Activated T-helper 1 cell treated with anti-CD3 and anti-CD28 coated beads, Interleukin-12 subunit alpha, Interleukin-12 subunit beta, Interleukin-2, Interleukin-4 antibody, amounts not matched to agents 30 ng/mL and 10 ng/mL and 1 ng/mL, durations not matched to agents 14 hours and 24 hours and 36 hours (primary cell): ENCODE measurements at regions of chr2 and their contacts with region 1.

Region 1: DNA sequence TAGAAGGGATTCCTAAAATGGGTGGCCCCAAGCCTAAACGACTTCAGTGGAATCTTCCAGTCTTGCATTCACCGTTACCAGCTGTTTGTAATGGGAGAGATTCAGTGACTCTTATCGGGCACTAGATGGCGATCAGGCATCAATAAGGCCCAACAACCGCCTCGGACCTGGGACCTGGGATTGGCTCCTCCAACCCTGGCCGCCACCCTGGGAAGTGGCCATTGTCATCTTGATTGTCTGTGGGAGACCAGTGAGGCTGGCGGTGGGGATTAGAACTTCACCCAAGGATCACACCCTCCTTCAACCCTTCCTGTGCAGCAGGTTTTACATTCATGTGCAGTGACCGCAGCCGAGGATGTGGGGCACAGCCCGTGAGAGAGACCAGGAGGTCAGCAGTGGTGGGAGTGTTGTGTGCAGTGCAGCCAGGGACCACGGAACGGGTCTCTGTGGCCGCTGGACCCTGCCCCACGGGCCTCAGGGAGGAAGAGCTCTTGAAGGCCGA is 85.3 kb downstream of the SPP2 start:
- DNase-seq: peak; percentile 43
- H3K4me3 Mint-ChIP-seq: no peak overlapping the region
- H3K27ac Mint-ChIP-seq: no peak overlapping the region
- H3K4me1 Mint-ChIP-seq: peaks cover 19% of the 10 kb centered on the region
- H3K27me3 Mint-ChIP-seq: peaks cover 10% of the 10 kb centered on the region

Region 2: GRCh38 chr2:233832869-233833311 is 302.9 kb before region 1 on chr2:
- intact Hi-C with region 1: no loop called
- DNase-seq: no peak
- H3K4me3 Mint-ChIP-seq: no peak overlapping the region
- H3K27ac Mint-ChIP-seq: no peak overlapping the region
- H3K4me1 Mint-ChIP-seq: peaks cover 9% of the 10 kb centered on the region
- H3K27me3 Mint-ChIP-seq: no peaks in the 10 kb centered on the region

Region 3: DNA sequence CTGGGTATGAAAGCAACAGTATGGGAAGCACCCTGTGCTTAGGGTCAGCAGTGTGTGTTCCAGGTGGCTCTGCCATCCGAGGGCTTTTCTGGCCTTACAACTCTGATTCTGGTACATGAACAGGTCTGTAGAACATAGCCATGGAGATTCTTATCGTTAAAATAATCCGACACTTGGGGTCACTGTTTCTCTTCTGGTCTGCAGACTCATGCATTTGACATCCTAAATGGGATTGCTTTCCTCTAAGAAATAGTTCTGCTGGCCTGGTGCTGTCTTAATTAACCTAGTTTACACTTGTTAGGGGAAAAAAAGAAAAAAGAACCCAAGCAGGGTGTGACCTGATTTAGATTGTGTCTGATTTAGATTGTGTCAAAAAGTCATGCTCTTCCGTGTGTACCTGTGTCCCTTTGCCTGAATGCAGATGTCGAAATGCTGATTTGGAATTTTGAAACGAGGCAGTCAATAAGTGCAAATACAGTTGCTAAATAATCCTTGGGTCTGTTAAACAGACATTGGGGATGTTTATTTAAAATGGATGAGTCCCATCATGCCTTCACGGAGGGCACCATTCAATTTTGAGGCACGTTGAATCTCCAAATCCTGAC is 159.0 kb before region 1 on chr2:
- intact Hi-C with region 1: loop called (anchors 1 kb)
- DNase-seq: peak; percentile 12
- H3K4me3 Mint-ChIP-seq: no peak overlapping the region
- H3K27ac Mint-ChIP-seq: no peak overlapping the region
- H3K4me1 Mint-ChIP-seq: peaks cover 39% of the 10 kb centered on the region
- H3K27me3 Mint-ChIP-seq: peaks cover 10% of the 10 kb centered on the region

Region 4: DNA sequence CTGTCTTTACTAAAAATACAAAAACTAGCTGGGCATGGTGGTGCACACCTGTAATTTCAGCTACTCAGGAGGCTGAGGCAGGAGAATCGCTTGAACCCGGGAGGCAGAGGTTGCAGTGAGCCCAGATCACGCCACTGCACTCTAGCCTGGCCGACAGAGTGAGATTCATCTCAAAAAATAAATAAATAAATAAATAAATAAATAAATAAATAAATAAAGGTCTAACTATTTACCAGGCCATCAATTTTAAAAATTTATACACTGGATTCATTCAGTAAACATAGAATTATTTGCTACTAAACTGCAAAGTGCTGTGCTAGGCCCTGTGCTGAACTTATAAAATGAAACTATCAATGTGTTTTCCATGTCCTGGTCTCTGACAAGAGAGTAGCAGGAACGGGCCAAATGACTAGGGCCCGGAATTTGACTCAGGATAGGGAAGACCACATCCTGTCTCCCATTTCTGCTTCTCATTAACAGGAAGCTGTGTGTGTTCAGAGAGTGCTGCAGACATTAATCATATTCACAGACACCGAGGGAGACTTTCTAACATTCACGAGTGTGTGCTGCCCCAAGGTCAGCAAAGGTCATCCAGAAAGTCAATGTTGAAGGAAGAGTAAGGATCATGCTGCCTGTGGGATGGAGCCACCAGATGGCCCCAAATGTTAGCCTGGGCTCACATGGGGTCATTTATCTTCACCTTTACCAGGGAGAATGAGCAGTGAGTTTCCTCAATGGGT is 10.5 kb after region 1 on chr2:
- intact Hi-C with region 1: no loop called
- DNase-seq: no peak
- H3K4me3 Mint-ChIP-seq: peak overlapping the region; percentile 43
- H3K27ac Mint-ChIP-seq: peak overlapping the region; percentile 10
- H3K4me1 Mint-ChIP-seq: peaks cover 35% of the 10 kb centered on the region
- H3K27me3 Mint-ChIP-seq: peaks cover 5% of the 10 kb centered on the region

Region 5: GRCh38 chr2:234278556-234279255 is 142.9 kb after region 1 on chr2:
- intact Hi-C with region 1: loop called (anchors 2 kb)
- DNase-seq: peak; percentile 35
- H3K4me3 Mint-ChIP-seq: peak overlapping the region; percentile 44
- H3K27ac Mint-ChIP-seq: peak overlapping the region; percentile 82
- H3K4me1 Mint-ChIP-seq: peaks cover 81% of the 10 kb centered on the region
- H3K27me3 Mint-ChIP-seq: no peaks in the 10 kb centered on the region

Region 6: DNA sequence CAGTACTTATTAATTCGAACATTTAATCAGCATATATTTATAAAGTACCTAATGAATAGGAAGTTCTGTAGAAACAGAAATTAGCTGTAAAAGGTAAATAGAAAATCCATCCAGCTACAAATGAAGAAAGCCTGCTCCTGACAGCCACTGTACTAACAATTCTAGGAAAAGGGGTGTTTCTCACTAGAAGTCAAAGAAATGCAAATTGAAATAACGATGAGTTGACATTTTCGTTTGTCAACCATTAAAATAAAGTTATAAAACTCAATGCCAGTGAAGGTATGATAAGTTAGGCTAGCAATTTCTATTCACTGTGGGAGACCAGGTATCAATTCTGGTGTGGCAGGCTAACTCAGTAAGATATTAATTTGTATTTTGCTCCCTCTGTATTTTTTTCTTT is 163.1 kb after region 1 on chr2:
- intact Hi-C with region 1: no loop called
- DNase-seq: no peak
- H3K4me3 Mint-ChIP-seq: no peak overlapping the region
- H3K27ac Mint-ChIP-seq: peak overlapping the region; percentile 36
- H3K4me1 Mint-ChIP-seq: peaks cover 84% of the 10 kb centered on the region
- H3K27me3 Mint-ChIP-seq: no peaks in the 10 kb centered on the region

Region 7: GRCh38 chr2:234451852-234452625 is 316.3 kb after region 1 on chr2:
- intact Hi-C with region 1: loop called (anchors 5 kb)
- DNase-seq: no peak
- H3K4me3 Mint-ChIP-seq: peak overlapping the region; percentile 79
- H3K27ac Mint-ChIP-seq: peak overlapping the region; percentile 90
- H3K4me1 Mint-ChIP-seq: peaks cover 88% of the 10 kb centered on the region
- H3K27me3 Mint-ChIP-seq: peaks cover 2% of the 10 kb centered on the region

Region 8: DNA sequence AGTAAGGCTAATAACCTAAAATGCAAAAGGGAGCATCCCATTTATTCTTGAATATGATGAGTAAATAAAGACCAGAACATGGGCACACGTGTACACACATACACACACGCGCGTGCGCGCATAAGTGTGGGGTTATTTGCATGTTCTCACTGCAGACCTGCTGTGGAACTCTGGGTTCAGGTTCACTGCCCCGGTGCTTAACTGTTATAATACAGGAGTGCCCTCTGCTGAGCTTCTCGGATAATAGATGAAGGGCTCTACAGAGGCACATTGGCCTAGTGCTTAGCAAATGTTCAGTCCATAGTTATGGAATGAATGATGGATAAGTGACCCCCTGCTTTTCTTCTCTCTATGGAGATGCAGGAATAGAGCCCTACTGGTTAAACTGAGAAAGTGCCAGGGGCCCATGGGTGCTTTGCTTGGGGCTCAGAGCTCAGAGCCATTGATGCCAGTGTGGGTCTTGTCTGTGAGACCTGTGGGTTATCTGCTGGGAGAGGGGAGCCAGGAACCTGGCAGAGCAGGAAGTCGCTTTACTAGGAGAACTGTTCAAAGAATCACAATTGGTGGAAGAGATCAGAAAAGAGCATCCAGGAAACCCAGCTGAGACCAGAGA is 364.7 kb after region 1 on chr2:
- intact Hi-C with region 1: loop called (anchors 1 kb)
- DNase-seq: peak; percentile 72
- H3K4me3 Mint-ChIP-seq: peak overlapping the region; percentile 58
- H3K27ac Mint-ChIP-seq: peak overlapping the region; percentile 34
- H3K4me1 Mint-ChIP-seq: peaks cover 32% of the 10 kb centered on the region
- H3K27me3 Mint-ChIP-seq: peaks cover 13% of the 10 kb centered on the region

Region 9: GRCh38 chr2:234544659-234545611 is 409.2 kb after region 1 on chr2:
- intact Hi-C with region 1: loop called (anchors 1 kb)
- DNase-seq: peak; percentile 70
- H3K4me3 Mint-ChIP-seq: no peak overlapping the region
- H3K27ac Mint-ChIP-seq: no peak overlapping the region
- H3K4me1 Mint-ChIP-seq: peaks cover 5% of the 10 kb centered on the region
- H3K27me3 Mint-ChIP-seq: peaks cover 15% of the 10 kb centered on the region